Activated CD4-positive, alpha-beta T cell treated with anti-CD3 and anti-CD28 coated beads, Interleukin-2, amount 10 ng/mL, durations not matched to agents 24 days and 14 days (primary cell): ENCODE measurements at regions of chr3 and their contacts with region 1.

Region 1: GRCh38 chr3:100260685-100261484 is at the start of gene TBC1D23:
- DNase-seq: peak; percentile 99
- H3K4me3 Mint-ChIP-seq: peak within 1 kb of the TSS; percentile 98
- H3K27ac Mint-ChIP-seq: peak within 1 kb of the TSS; percentile 96
- H3K4me1 Mint-ChIP-seq: peaks cover 33% of the 10 kb centered on the region
- H3K27me3 Mint-ChIP-seq: no peaks in the 10 kb centered on the region
- total RNA-seq, gene TBC1D23: 17.6 and 19.4 TPM in 2 replicates

Region 2: GRCh38 chr3:99817437-99818240 is 443.2 kb before region 1 on chr3 and contains the start of gene CMSS1:
- intact Hi-C with region 1: loop called (anchors 1 kb)
- DNase-seq: peak; percentile 99
- H3K4me3 Mint-ChIP-seq: peak within 1 kb of the TSS; percentile 100
- H3K27ac Mint-ChIP-seq: peak within 1 kb of the TSS; percentile 99
- H3K4me1 Mint-ChIP-seq: peaks cover 31% of the 10 kb centered on the region
- H3K27me3 Mint-ChIP-seq: peaks cover 2% of the 10 kb centered on the region
- total RNA-seq, gene CMSS1: 117 and 126 TPM in 2 replicates

Region 3: GRCh38 chr3:100210772-100211135 is 50.1 kb before region 1 on chr3:
- intact Hi-C with region 1: loop called (anchors 2 kb)
- DNase-seq: peak; percentile 75
- H3K4me3 Mint-ChIP-seq: no peak overlapping the region
- H3K27ac Mint-ChIP-seq: peak overlapping the region; percentile 82
- H3K4me1 Mint-ChIP-seq: peaks cover 20% of the 10 kb centered on the region
- H3K27me3 Mint-ChIP-seq: peaks cover 3% of the 10 kb centered on the region

Region 4: DNA sequence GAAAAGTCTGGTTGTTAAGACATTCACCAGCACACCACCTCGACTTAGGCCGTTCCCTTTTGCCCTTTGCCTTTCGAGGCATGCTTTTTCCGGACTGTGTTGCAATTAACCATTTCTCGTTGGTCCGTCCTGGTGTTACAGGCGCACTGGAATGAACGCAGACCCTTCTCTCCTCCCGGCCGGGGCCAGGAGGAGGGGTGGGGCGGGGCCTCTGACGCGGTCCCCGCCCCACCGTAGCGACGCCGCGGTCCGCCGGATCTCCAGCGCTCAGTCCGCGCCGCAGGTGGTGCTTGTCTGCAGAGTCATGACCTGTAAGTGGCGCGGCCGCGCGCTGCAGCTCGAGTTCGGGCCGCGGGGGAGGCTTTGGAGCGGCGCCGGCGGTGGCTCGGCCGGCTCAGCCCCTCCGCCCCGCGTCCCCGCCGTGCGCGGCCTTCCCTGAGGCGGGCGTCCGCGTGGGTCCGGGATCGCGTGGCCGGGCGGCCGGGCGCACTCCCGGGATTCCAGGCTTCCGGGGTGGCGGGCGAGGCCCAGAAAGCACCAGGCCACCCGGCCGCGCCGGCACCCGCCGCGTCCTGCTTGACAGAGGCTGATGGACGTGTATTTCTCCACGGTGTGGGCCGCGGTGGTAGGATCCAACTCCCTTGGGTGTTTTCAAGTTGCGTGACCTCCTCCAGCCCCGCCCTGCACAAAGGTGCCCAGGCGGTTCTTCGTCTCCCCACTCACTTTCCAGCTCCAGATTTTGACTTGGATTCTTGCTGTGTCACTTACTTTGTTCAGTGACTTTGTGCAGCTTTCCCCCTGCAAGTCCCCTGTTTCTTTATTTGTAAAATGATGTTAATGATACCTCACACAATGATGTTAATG is 73.8 kb after region 1 on chr3 and contains the start of gene NIT2:
- intact Hi-C with region 1: loop called (anchors 2 kb)
- DNase-seq: peak; percentile 93
- H3K4me3 Mint-ChIP-seq: peak within 1 kb of the TSS; percentile 95
- H3K27ac Mint-ChIP-seq: peak within 1 kb of the TSS; percentile 98
- H3K4me1 Mint-ChIP-seq: peaks cover 18% of the 10 kb centered on the region
- H3K27me3 Mint-ChIP-seq: no peaks in the 10 kb centered on the region
- total RNA-seq, gene NIT2: 75.5 and 79.2 TPM in 2 replicates

Region 5: GRCh38 chr3:101676765-101677435 is 1416.0 kb after region 1 on chr3 and contains the start of gene ZBTB11:
- intact Hi-C with region 1: loop called (anchors 2 kb)
- DNase-seq: peak; percentile 100
- H3K4me3 Mint-ChIP-seq: peak within 1 kb of the TSS; percentile 89
- H3K27ac Mint-ChIP-seq: peak within 1 kb of the TSS; percentile 97
- H3K4me1 Mint-ChIP-seq: peaks cover 36% of the 10 kb centered on the region
- H3K27me3 Mint-ChIP-seq: no peaks in the 10 kb centered on the region
- total RNA-seq, gene ZBTB11: 29.0 and 30.2 TPM in 2 replicates